Caco-2 (cell line): ENCODE measurements at regions of chr17 and their contacts with region 1.

Region 1: GRCh38 chr17:38322091-38322779 is 21.5 kb downstream of the GPR179 start:
- DNase-seq: peak; percentile 74 to 82
- H3K4me3 ChIP-seq: no peak overlapping the region
- H3K4me3 Mint-ChIP-seq: no peak overlapping the region
- H3K27ac Mint-ChIP-seq: no peak overlapping the region
- H3K4me1 ChIP-seq: peaks cover 37% of the 10 kb centered on the region
- H3K4me1 Mint-ChIP-seq: peaks cover 25% of the 10 kb centered on the region
- H3K27me3 ChIP-seq: no peaks in the 10 kb centered on the region
- H3K27me3 Mint-ChIP-seq: no peaks in the 10 kb centered on the region
- CTCF ChIP-seq: peak; percentile 83 to 85

Region 2: DNA sequence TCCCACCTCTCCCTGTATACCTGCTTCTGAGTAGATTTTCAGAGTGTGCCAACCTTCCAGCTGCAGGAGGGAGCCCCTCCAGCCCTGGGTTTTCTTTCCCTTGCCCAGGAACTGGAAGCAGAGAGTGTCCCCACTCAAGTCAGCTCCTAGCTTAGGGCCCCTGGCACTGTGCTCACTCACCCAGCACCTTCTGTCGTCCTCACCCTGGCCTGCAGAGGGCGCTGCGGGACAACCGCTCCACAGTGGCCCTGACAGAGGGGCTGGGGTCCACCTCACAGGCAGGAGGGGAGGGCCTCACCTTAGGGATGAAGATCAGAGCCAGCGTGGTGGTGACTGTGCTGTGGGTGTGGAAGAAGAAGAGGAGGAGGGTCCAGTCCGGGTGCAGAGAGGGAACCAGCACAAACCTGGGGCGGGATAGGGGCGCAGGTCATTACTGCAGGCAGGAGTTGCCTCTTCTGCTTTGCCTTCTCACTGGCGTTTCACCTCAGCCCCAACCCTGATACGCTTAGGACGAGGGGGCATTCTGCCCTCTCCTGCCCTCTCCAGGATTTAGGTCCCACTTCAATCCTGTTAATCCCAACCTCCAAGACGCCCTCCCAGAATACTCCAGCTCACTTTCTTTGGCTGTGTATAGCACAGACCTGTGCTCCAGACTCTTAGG is 11.5 kb after region 1 on chr17:
- CTCF ChIA-PET with region 1: interaction called, 14 read pairs
- POLR2A ChIA-PET with region 1: no interaction called
- intact Hi-C with region 1: no loop called
- DNase-seq: peak; percentile 72 to 80
- H3K4me3 ChIP-seq: no peak overlapping the region
- H3K4me3 Mint-ChIP-seq: no peak overlapping the region
- H3K27ac Mint-ChIP-seq: no peak overlapping the region
- H3K4me1 ChIP-seq: no peaks in the 10 kb centered on the region
- H3K4me1 Mint-ChIP-seq: no peaks in the 10 kb centered on the region
- H3K27me3 ChIP-seq: no peaks in the 10 kb centered on the region
- H3K27me3 Mint-ChIP-seq: peaks cover under 1% of the 10 kb centered on the region
- CTCF ChIP-seq: peak; percentile 73 to 85

Region 3: DNA sequence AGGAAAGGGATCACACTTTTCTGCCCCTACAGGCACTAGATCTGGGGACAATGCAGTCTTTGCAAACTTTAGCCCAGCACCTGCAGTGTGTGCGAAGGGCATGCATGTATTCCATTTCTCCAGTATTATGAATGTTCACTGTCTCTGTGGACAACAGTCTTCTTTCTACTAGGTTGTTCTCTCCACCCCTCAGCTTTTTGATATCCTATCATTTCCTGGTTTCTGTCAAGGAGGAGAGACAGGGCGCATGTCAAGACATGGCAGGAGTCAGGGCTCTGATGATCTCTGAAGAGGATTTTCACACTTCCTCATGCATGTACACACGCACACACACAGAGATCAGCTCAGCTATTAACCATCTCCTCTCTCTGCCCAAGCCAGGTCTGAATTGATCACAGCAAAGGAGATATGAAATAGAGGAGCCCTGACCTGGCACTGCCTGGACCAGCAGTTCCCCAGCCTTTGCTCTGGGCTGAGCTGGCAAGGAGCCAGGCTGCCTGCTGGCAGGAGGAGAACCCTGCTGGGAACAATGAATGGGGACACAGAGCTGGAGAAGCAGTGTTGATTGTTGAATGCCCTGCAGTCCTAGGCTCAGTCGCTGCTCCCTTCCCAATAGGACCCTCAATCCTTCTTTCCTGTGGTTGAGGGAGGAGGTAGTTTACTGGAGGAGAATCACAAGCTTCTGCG is 18.9 kb after region 1 on chr17:
- CTCF ChIA-PET with region 1: interaction called, 12 read pairs
- POLR2A ChIA-PET with region 1: no interaction called
- intact Hi-C with region 1: no loop called
- DNase-seq: no peak
- H3K4me3 ChIP-seq: no peak overlapping the region
- H3K4me3 Mint-ChIP-seq: no peak overlapping the region
- H3K27ac Mint-ChIP-seq: no peak overlapping the region
- H3K4me1 ChIP-seq: peaks cover 4% of the 10 kb centered on the region; the same call in 1 of the 2 replicates
- H3K4me1 Mint-ChIP-seq: no peaks in the 10 kb centered on the region
- H3K27me3 ChIP-seq: no peaks in the 10 kb centered on the region
- H3K27me3 Mint-ChIP-seq: no peaks in the 10 kb centered on the region
- CTCF ChIP-seq: no peak